ENCODE measurements at regions of chr1 and their contacts with region 1.

Region 1: DNA sequence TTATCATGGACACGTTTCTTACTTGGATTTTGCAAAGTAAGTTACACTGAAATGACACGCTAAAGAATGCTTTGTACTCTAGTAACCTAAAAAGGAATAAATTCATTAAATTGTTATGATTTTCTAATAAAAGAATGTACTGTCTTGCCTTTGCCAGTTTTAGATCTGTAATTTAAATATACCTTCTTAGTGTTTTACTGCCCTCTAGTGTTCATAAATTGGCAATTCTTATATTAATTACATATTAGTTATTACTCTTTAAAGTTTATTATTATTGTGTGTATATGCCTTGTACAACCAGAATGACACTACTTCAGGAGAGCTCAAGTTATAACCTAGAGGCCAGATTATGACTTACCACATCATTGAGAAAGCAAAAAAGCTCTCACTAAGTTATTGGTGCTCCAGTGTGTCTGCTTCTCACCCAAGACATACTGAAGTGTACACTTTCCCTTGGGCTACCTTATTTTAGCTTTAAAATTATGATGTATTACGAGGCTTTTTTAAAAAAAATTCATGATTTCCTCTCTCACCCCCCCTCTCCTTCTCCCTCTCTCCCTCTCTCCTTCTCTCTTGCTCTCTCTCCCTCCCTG is 169.9 kb downstream of the HS2ST1 start:
- DNase-seq: no peak
- ATAC-seq: peak; percentile 30
- H3K4me3 Mint-ChIP-seq: no peak overlapping the region
- H3K27ac Mint-ChIP-seq: no peak overlapping the region
- H3K4me1 Mint-ChIP-seq: peaks cover 13% of the 10 kb centered on the region
- H3K27me3 Mint-ChIP-seq: no peaks in the 10 kb centered on the region

Region 2: DNA sequence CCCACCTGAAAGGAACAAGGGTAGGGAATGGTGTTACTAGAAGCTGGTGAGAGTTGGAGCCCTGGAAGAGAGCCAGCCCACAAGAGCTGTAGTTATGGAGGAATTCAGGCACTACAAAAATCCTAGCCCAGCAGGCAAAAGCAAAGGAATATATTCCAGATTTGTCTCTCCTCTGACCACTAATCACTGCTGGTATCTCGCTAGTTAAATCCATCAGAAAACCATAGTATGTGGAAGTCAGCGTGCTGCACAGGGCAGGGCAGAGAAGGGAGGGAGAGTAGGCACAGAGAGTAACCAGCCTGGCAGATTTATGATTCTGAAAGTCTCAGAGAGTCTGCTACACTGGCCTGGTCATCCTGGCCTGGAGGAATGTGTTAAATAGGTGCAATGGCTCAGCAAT is 259.0 kb before region 1 on chr1:
- CTCF ChIA-PET with region 1: interaction called, 21 read pairs
- POLR2A ChIA-PET with region 1: no interaction called
- intact Hi-C with region 1: no loop called
- DNase-seq: no peak
- ATAC-seq: no peak
- H3K4me3 Mint-ChIP-seq: no peak overlapping the region
- H3K27ac Mint-ChIP-seq: no peak overlapping the region
- H3K4me1 Mint-ChIP-seq: no peaks in the 10 kb centered on the region
- H3K27me3 Mint-ChIP-seq: peaks cover 12% of the 10 kb centered on the region

Region 3: GRCh38 chr1:86965012-86965826 is 119.1 kb before region 1 on chr1:
- CTCF ChIA-PET with region 1: interaction called, 4 read pairs
- POLR2A ChIA-PET with region 1: no interaction called
- intact Hi-C with region 1: loop called (anchors 2 to 10 kb)
- DNase-seq: peak; percentile 28
- ATAC-seq: peak; percentile 36
- H3K4me3 Mint-ChIP-seq: no peak overlapping the region
- H3K27ac Mint-ChIP-seq: no peak overlapping the region
- H3K4me1 Mint-ChIP-seq: no peaks in the 10 kb centered on the region
- H3K27me3 Mint-ChIP-seq: no peaks in the 10 kb centered on the region

Region 4: GRCh38 chr1:87045761-87046304 is 38.5 kb before region 1 on chr1:
- CTCF ChIA-PET with region 1: interaction called, 17 read pairs
- POLR2A ChIA-PET with region 1: no interaction called
- intact Hi-C with region 1: loop called in 1 of 2 experiments (anchors 2 kb)
- DNase-seq: peak; percentile 80
- ATAC-seq: peak; percentile 81
- H3K4me3 Mint-ChIP-seq: peak overlapping the region; percentile 57
- H3K27ac Mint-ChIP-seq: peak overlapping the region; percentile 94
- H3K4me1 Mint-ChIP-seq: peaks cover 58% of the 10 kb centered on the region
- H3K27me3 Mint-ChIP-seq: no peaks in the 10 kb centered on the region